Mammary epithelial cell (primary cell): ENCODE measurements at regions of chr2 and their contacts with region 1.

Region 1: GRCh38 chr2:45650851-45651414 is 542 bp upstream of the PRKCE start:
- DNase-seq: peak; percentile 95
- H3K4me3 ChIP-seq: peak overlapping the region; percentile 60 to 95 (median 70)
- H3K27ac ChIP-seq: peak overlapping the region; percentile 57
- H3K4me1 ChIP-seq: peaks cover 17% of the 10 kb centered on the region
- H3K27me3 ChIP-seq: no peaks in the 10 kb centered on the region
- CTCF ChIP-seq: peak; percentile 26 to 58

Region 2: DNA sequence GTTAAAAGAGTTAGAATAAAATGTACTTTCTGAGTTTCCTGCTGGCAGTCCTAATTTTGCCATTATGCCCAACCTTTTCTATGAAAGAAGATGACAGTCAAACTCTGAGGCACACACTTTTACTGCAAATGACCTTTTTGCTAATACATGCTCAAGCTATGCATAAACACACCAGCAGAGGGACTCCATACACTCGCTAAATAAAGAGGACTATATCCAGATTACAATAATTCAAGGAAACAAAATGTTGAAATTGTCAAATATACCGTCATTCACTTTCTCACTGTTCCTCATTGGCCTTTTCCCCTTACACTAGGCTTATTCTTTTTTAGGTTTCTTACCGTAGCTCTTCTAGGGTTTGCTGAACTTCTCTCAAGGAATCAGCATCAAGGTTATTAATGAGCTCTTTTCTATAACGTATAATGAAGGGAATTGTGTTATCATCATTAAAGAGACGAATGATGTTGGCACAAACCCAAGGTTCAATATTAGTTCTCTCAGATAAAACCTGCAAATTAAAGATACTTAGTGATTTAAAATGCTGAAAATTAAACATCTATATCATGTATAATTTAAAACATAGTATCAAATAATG is 65.6 kb before region 1 on chr2:
- CTCF ChIA-PET with region 1: interaction called, 3 read pairs
- dilution Hi-C with region 1: no loop called
- in situ Hi-C with region 1: no loop called
- intact Hi-C with region 1: loop called (anchors 2 kb)
- DNase-seq: peak; percentile 32
- H3K4me3 ChIP-seq: no peak overlapping the region
- H3K27ac ChIP-seq: no peak overlapping the region
- H3K4me1 ChIP-seq: no peaks in the 10 kb centered on the region
- H3K27me3 ChIP-seq: no peaks in the 10 kb centered on the region
- CTCF ChIP-seq: peak; percentile 81 to 84

Region 3: GRCh38 chr2:45681675-45682074 is 30.7 kb after region 1 on chr2:
- CTCF ChIA-PET with region 1: no interaction called
- dilution Hi-C with region 1: no loop called
- in situ Hi-C with region 1: no loop called
- intact Hi-C with region 1: loop called (anchors 1 kb)
- DNase-seq: peak; percentile 76
- H3K4me3 ChIP-seq: no peak overlapping the region
- H3K27ac ChIP-seq: no peak overlapping the region
- H3K4me1 ChIP-seq: peaks cover 19% of the 10 kb centered on the region
- H3K27me3 ChIP-seq: no peaks in the 10 kb centered on the region
- CTCF ChIP-seq: no peak

Region 4: GRCh38 chr2:45712570-45712969 is 61.6 kb after region 1 on chr2:
- CTCF ChIA-PET with region 1: no interaction called
- dilution Hi-C with region 1: no loop called
- in situ Hi-C with region 1: no loop called
- intact Hi-C with region 1: loop called (anchors 2 kb)
- DNase-seq: no peak
- H3K4me3 ChIP-seq: no peak overlapping the region
- H3K27ac ChIP-seq: no peak overlapping the region
- H3K4me1 ChIP-seq: peaks cover 6% of the 10 kb centered on the region
- H3K27me3 ChIP-seq: no peaks in the 10 kb centered on the region
- CTCF ChIP-seq: peak in 1 of 2 donors; percentile 54

Region 5: DNA sequence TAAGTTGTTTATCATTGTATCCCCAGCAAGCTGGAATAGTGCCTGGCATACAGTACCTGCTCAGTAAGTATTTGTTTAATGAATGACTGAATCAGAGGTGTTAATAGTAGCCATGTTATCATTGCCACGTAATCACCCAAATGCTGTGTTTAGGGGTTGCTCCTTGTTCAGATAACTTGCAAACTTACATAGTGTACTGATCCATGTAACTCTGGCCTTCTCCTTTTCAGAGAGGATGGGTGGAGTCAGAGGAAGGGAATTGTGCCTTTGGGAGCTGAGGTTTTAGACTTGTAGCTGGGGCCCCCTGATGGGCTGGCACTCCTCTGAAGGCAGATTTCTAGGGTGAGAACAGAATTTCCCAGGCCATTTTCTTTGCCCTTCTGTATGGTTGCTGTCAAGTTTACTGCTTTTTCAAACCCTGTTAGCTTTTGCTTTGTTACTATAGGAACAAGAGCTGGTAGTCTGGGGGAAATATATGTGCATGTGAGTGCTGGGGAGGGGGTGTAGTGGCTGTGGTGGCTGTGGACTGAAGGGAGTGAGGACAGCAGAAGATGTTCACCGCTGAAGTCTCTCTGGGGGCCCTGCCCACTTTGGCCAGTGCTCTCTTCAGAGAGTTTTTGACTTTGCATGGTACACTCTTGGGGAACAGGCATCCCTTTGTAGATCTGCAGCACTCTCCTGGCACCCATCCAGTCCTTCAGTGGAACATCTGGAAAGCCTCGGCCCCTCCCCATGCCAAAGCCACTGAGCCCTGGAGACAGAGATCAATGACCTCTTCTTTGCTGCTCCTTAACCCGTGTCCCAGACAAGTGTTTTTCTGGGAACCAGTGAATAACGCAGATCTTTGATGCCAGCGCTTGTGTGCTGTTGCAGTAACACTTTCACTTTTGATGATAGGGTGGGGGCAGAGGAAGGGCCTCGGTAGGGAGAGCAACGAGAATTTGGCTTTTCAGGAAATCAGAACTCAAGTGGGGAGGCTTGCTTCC is 209.5 kb after region 1 on chr2:
- CTCF ChIA-PET with region 1: no interaction called
- dilution Hi-C with region 1: no loop called
- in situ Hi-C with region 1: no loop called
- intact Hi-C with region 1: loop called (anchors 5 kb)
- DNase-seq: peak; percentile 25
- H3K4me3 ChIP-seq: peak overlapping the region in 2 of 3 experiments; percentile 10 to 11
- H3K27ac ChIP-seq: no peak overlapping the region
- H3K4me1 ChIP-seq: no peaks in the 10 kb centered on the region
- H3K27me3 ChIP-seq: no peaks in the 10 kb centered on the region
- CTCF ChIP-seq: peak in 1 of 2 donors; percentile 13